ENCODE measurements at regions of chr17 and their contacts with region 1.

Region 1: DNA sequence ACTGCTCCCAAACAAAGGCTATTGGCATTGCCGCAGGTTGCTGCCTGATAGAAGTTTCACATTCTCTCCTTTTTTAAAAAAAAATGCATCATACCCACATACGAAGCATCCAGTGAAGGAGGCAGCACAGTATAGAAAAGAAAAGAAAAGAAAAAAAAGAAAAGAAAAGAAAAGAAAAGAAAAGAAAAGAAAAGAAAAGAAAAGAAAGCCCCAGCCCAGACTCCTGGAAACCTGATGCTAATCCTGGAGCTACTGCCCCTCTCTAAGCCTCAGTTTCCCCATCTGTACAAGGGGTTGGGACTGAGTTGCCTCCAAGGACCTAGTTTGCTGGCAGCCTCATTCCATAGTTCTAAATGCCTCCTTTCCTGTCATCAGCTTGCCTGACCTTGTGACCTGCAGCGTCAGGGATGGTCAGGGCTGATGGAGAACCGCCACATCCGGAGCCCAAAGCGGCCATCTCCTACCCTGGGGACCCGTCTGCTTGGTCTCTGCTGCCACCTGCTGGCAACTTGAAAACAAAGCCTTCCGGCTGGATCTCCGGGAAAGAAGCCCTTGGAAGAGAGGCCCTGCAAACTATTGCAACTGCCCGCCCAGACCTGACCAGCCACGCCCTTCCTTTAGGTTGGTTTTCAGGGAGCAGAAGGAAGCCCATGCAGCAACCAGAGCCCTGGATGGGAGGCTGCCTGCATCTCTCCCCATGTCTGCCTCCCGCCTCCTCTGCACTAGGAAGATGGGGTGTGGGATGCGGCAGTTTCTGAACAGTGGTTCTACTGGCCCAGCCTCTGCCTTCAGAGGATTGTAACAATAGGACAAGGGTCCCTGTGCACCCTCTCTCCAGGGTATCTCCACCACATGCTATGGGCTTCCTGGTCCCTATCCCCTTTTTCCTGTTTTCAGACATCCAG is 13.0 kb downstream of the AIPL1 start:
- DNase-seq: peak; percentile 64
- ATAC-seq: peak; percentile 92
- H3K4me3 ChIP-seq: no peak overlapping the region
- H3K27ac ChIP-seq: no peak overlapping the region
- H3K4me1 ChIP-seq: no peaks in the 10 kb centered on the region
- H3K27me3 ChIP-seq: peaks cover 16% of the 10 kb centered on the region
- CTCF ChIP-seq: peak; percentile 91
- POLR2A ChIP-seq: no peak
- RAD21 ChIP-seq: peak; percentile 96

Region 2: DNA sequence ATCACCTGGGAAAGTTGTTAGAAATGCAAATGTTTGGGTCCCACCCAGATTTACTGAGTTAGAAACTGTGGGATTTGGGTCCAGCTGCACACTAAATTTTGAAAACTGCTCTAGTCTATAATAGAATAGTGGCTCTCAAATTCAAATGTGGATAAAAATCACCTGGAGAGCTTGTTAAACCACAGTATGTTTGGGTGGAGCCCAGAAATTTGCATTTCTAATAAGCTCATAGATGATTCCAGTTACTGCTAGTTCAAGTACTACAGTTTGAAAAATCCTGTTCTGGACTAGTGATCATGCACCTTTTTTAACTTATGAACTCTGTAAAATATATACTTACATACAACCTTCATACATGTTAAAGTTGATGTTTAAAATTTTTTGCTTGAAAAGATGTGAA is 1112.1 kb before region 1 on chr17:
- CTCF ChIA-PET with region 1: no interaction called
- POLR2A ChIA-PET with region 1: no interaction called
- dilution Hi-C with region 1: no loop called
- in situ Hi-C with region 1: no loop called
- intact Hi-C with region 1: no loop called
- DNase-seq: no peak
- ATAC-seq: no peak
- H3K4me3 ChIP-seq: no peak overlapping the region
- H3K27ac ChIP-seq: no peak overlapping the region
- H3K4me1 ChIP-seq: 0 out of 2 replicates have a peak, but pooled peaks cover 2% of the 10 kb centered on the region
- H3K27me3 ChIP-seq: no peaks in the 10 kb centered on the region
- CTCF ChIP-seq: no peak
- POLR2A ChIP-seq: no peak
- RAD21 ChIP-seq: no peak

Region 3: DNA sequence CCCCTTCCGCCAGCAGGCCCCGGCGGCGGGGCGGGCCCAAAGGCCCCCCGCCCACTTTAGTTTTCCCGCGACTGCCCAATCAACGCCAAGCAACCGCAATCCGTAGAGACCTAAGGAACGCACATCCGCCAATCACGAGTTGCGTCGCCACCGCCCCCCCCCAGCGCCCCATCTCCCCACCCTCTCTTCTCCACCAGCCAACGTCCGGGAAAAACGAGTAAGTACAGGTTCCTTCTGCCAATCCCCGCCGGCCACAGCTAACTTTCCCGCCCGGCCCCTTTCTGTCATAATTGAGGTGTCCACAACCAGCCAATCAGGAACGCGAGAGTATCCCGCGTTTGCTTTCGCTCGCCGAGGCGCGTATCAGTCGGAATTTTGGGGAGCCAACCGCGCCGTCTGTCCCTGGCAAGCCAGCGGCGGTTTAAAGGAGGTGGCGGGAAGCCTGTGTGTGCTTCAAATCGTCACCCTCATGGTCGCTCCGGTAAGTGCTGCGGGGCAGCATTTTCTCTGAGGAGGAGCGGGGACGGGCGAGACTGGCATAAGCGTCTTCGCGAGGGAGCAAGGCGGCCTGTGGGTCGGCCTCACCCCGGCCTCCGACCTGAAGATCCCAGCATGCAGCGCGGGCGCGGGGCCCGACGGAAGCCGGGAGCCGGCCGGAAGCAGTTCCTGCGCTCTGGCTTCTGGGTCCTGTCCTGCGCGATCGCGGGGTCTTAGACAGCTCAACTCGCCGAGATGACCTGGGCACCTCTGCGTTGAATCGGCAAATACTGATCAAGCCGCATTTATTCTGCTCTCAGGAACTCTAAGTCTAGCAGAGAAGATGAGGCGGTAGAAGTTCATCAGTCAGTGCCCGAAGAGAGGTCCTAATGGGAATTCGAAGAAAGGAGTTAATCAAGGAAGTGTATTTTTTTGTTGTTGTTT is 935.5 kb before region 1 on chr17 and contains the start of gene MIS12:
- CTCF ChIA-PET with region 1: no interaction called
- POLR2A ChIA-PET with region 1: no interaction called
- dilution Hi-C with region 1: no loop called
- in situ Hi-C with region 1: no loop called
- intact Hi-C with region 1: loop called (anchors 5 kb)
- DNase-seq: peak; percentile 98
- ATAC-seq: peak; percentile 94
- H3K4me3 ChIP-seq: peak within 1 kb of the TSS; percentile 97
- H3K27ac ChIP-seq: peak within 1 kb of the TSS; percentile 98
- H3K4me1 ChIP-seq: peaks cover 2% of the 10 kb centered on the region; the same call in 1 of the 2 replicates
- H3K27me3 ChIP-seq: no peaks in the 10 kb centered on the region
- CTCF ChIP-seq: no peak
- POLR2A ChIP-seq: peak; percentile 88
- RAD21 ChIP-seq: peak; percentile 4; the same call in 1 of the 2 replicates
- total RNA-seq, gene MIS12: 11.7 and 18.1 TPM in 2 replicates

Region 4: DNA sequence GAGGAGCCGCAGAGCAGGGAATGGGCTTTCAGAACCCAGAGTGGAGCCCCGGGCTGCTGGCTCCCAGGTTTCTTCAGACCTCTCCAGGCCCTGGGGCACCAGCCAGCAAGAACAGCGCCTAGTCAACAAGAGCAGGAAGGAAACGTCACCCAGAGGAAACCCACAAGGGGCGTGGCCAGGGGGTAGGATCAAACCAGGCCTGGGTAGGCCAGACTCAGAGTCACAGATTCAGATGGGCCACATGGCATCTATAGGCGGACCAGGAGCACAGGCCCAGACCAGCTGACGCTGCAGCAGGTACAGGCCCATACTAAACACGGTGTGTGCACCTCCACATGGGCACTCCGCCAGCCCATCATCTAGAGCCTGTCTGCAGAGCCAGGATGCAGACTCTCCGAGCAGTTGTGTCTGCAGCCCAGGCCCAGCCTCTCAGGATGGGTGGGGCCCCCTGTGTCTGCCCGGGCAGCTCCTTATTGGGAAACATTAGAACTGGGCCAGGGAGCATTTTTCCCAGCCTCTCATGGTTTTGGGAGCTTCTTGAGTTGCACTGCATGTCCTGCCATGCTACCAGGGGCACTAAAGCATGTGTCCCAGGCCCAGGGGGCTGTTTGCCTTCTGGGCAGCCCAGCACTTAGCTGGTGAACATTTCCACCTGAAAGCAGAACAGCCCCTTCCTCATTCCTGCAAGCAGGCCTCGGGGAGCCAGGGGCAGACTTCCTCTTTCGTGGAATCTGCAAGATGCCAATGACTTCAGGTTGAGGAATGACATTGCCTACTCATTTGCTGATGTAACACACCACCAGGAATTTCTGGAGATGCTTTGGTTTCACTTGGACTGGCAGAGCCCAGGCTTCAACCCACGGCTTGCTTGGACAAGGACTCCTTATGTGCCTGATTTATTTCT is 837.3 kb before region 1 on chr17 and contains the start of gene NLRP1:
- CTCF ChIA-PET with region 1: interaction called, 4 read pairs
- POLR2A ChIA-PET with region 1: no interaction called
- dilution Hi-C with region 1: no loop called
- in situ Hi-C with region 1: loop called (anchors 5 kb)
- intact Hi-C with region 1: loop called (anchors 1 kb)
- DNase-seq: peak; percentile 92
- ATAC-seq: peak; percentile 88
- H3K4me3 ChIP-seq: peak within 1 kb of the TSS; percentile 51
- H3K27ac ChIP-seq: peak within 1 kb of the TSS; percentile 92
- H3K4me1 ChIP-seq: peaks cover 20% of the 10 kb centered on the region
- H3K27me3 ChIP-seq: no peaks in the 10 kb centered on the region
- CTCF ChIP-seq: no peak
- POLR2A ChIP-seq: peak; percentile 75
- RAD21 ChIP-seq: no peak
- total RNA-seq, gene NLRP1: 134 and 172 TPM in 2 replicates

Region 5: GRCh38 chr17:5592382-5592781 is 829.6 kb before region 1 on chr17:
- CTCF ChIA-PET with region 1: interaction called, 11 read pairs
- POLR2A ChIA-PET with region 1: no interaction called
- dilution Hi-C with region 1: no loop called
- in situ Hi-C with region 1: loop called (anchors 5 kb)
- intact Hi-C with region 1: loop called (anchors 1 kb)
- DNase-seq: peak; percentile 44
- ATAC-seq: peak; percentile 55; the same call in 1 of the 2 replicates
- H3K4me3 ChIP-seq: no peak overlapping the region
- H3K27ac ChIP-seq: no peak overlapping the region
- H3K4me1 ChIP-seq: no peaks in the 10 kb centered on the region
- H3K27me3 ChIP-seq: peaks cover 17% of the 10 kb centered on the region
- CTCF ChIP-seq: peak; percentile 62
- POLR2A ChIP-seq: no peak
- RAD21 ChIP-seq: peak; percentile 64

Region 6: GRCh38 chr17:5706577-5707216 is 715.3 kb before region 1 on chr17:
- CTCF ChIA-PET with region 1: no interaction called
- POLR2A ChIA-PET with region 1: no interaction called
- dilution Hi-C with region 1: no loop called
- in situ Hi-C with region 1: loop called (anchors 10 kb)
- intact Hi-C with region 1: loop called (anchors 2 kb)
- DNase-seq: peak; percentile 63
- ATAC-seq: peak; percentile 92
- H3K4me3 ChIP-seq: no peak overlapping the region
- H3K27ac ChIP-seq: no peak overlapping the region
- H3K4me1 ChIP-seq: no peaks in the 10 kb centered on the region
- H3K27me3 ChIP-seq: peaks cover 2% of the 10 kb centered on the region
- CTCF ChIP-seq: peak; percentile 68
- POLR2A ChIP-seq: no peak
- RAD21 ChIP-seq: peak; percentile 65

Region 7: DNA sequence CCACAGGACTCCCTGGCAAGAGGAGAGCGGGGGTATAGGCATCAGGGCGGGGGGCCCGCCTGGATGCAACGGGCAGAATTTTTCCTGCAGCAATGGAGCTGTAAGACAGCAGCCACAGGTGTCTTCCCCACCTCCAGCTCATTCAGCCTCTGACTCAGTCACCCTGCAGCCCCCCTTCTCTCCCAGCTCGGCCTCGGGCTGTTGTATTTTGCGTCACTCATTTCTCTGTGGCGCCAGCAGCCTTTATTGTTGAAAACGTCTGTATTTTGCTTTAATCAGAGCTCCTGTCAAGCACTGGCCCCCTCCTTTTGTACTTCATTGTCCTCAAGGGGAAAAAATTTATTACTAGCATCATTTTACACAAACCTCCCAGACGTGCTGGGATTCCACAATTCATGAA is 234.1 kb before region 1 on chr17:
- CTCF ChIA-PET with region 1: no interaction called
- POLR2A ChIA-PET with region 1: no interaction called
- dilution Hi-C with region 1: no loop called
- in situ Hi-C with region 1: loop called (anchors 25 kb)
- intact Hi-C with region 1: no loop called
- DNase-seq: no peak
- ATAC-seq: no peak
- H3K4me3 ChIP-seq: no peak overlapping the region
- H3K27ac ChIP-seq: no peak overlapping the region
- H3K4me1 ChIP-seq: no peaks in the 10 kb centered on the region
- H3K27me3 ChIP-seq: no peaks in the 10 kb centered on the region
- CTCF ChIP-seq: no peak
- POLR2A ChIP-seq: no peak
- RAD21 ChIP-seq: no peak

Region 8: DNA sequence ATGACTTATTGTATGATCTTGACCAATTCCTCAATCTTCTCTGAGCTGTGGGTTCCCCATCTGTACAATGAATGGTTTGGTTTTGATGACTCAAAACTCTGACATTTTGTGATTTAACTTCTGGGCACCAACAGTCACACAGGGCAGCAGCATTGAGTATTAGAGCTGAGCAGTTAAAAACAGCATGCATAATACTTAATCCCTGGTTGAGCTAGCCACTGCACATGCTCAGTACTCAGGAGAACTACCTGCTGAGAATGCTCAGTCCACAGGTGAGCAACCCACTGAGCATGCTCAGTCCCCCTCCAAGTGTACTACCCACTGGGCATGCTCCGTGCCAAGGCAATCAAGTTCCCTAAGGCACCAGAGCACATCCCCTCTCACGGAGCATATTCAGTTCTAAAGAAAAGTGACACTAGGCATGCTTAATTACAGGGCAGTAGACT is 55.7 kb before region 1 on chr17:
- CTCF ChIA-PET with region 1: no interaction called
- POLR2A ChIA-PET with region 1: no interaction called
- dilution Hi-C with region 1: no loop called
- in situ Hi-C with region 1: no loop called
- intact Hi-C with region 1: loop called (anchors 5 kb)
- DNase-seq: peak; percentile 24
- ATAC-seq: peak; percentile 53
- H3K4me3 ChIP-seq: no peak overlapping the region
- H3K27ac ChIP-seq: no peak overlapping the region
- H3K4me1 ChIP-seq: peaks cover 21% of the 10 kb centered on the region
- H3K27me3 ChIP-seq: peaks cover 5% of the 10 kb centered on the region
- CTCF ChIP-seq: no peak
- POLR2A ChIP-seq: no peak
- RAD21 ChIP-seq: no peak

Region 9: GRCh38 chr17:6686026-6686425 is 264.1 kb after region 1 on chr17:
- CTCF ChIA-PET with region 1: no interaction called
- POLR2A ChIA-PET with region 1: no interaction called
- dilution Hi-C with region 1: no loop called
- in situ Hi-C with region 1: no loop called
- intact Hi-C with region 1: no loop called
- DNase-seq: no peak
- ATAC-seq: no peak
- H3K4me3 ChIP-seq: no peak overlapping the region
- H3K27ac ChIP-seq: no peak overlapping the region
- H3K4me1 ChIP-seq: no peaks in the 10 kb centered on the region
- H3K27me3 ChIP-seq: peaks cover 6% of the 10 kb centered on the region
- CTCF ChIP-seq: no peak
- POLR2A ChIP-seq: no peak
- RAD21 ChIP-seq: no peak

Measured in IMR-90 (cell line).